ENCODE measurements at regions of chr5 and their contacts with region 1.

Region 1: GRCh38 chr5:80216753-80217596 is 38.9 kb downstream of the SERINC5 start:
- DNase-seq: no peak
- H3K4me3 ChIP-seq: no peak overlapping the region
- H3K27ac ChIP-seq: peak overlapping the region; percentile 88
- H3K4me1 ChIP-seq: peaks cover 52% of the 10 kb centered on the region
- H3K27me3 ChIP-seq: no peaks in the 10 kb centered on the region
- CTCF ChIP-seq: no peak

Region 2: DNA sequence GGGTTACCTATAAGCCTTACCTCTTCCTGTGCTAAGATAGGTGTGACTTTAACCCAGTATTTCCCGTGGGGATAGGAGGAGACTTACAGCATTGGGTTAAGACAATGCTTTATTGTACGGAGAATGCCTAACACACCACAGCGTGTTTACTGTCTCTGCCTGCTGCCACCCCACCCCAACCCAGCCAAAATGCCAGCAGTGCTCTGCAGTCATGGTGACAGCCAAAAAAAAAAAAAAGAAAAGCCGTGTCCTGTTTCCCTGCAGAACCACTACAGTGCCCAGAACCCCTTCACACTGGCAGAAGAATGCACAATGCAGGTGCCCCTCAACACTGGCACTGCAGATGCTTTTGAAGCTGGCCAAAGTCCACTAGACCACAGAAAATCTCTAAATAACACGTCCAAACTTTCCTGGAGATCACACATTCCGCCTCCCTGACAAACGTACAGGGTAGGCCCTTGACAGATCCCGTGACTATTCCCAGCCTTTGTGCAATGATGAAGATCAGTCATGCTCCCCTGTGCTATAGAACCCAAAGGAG is 63.3 kb before region 1 on chr5:
- CTCF ChIA-PET with region 1: no interaction called
- POLR2A ChIA-PET with region 1: no interaction called
- intact Hi-C with region 1: no loop called
- DNase-seq: no peak
- H3K4me3 ChIP-seq: no peak overlapping the region
- H3K27ac ChIP-seq: no peak overlapping the region
- H3K4me1 ChIP-seq: no peaks in the 10 kb centered on the region
- H3K27me3 ChIP-seq: no peaks in the 10 kb centered on the region
- CTCF ChIP-seq: no peak

Region 3: GRCh38 chr5:80246001-80246758 is 29.2 kb after region 1 on chr5:
- CTCF ChIA-PET with region 1: no interaction called
- POLR2A ChIA-PET with region 1: interaction called, 3 read pairs
- intact Hi-C with region 1: loop called (anchors 1 kb)
- DNase-seq: peak in 1 of 2 experiments; percentile 67
- H3K4me3 ChIP-seq: peak overlapping the region; percentile 40; the same call in 1 of the 2 replicates
- H3K27ac ChIP-seq: peak overlapping the region; percentile 98
- H3K4me1 ChIP-seq: peaks cover 52% of the 10 kb centered on the region
- H3K27me3 ChIP-seq: no peaks in the 10 kb centered on the region
- CTCF ChIP-seq: no peak

Region 4: GRCh38 chr5:81156732-81157131 is 939.8 kb after region 1 on chr5:
- CTCF ChIA-PET with region 1: no interaction called
- POLR2A ChIA-PET with region 1: interaction called, 12 read pairs
- intact Hi-C with region 1: no loop called
- DNase-seq: no peak
- H3K4me3 ChIP-seq: no peak overlapping the region
- H3K27ac ChIP-seq: no peak overlapping the region
- H3K4me1 ChIP-seq: no peaks in the 10 kb centered on the region
- H3K27me3 ChIP-seq: no peaks in the 10 kb centered on the region
- CTCF ChIP-seq: no peak

Region 5: DNA sequence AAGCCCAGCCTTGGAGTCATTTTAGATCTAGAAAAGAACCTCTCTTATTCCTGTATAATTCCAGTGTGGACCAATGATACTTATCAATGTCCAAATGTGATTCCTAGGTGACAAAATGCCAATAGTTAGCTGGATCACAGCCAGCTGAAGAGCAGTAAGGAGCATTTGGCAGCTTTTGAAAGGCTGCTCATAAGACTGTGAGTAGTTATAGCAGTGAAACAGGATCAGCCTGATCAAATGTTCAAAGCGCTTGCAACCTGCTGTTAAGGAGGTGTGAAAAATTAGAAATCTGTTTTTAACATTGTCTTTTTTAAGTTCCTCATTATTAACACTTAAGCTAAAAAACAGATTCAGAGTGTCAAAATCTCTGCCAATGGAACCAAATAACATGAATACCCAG is 1448.8 kb after region 1 on chr5:
- CTCF ChIA-PET with region 1: no interaction called
- POLR2A ChIA-PET with region 1: no interaction called
- intact Hi-C with region 1: no loop called
- DNase-seq: no peak
- H3K4me3 ChIP-seq: no peak overlapping the region
- H3K27ac ChIP-seq: no peak overlapping the region
- H3K4me1 ChIP-seq: no peaks in the 10 kb centered on the region
- H3K27me3 ChIP-seq: no peaks in the 10 kb centered on the region
- CTCF ChIP-seq: no peak